CD4-positive, alpha-beta T cell (primary cell): ENCODE measurements at regions of chr12 and their contacts with region 1.

Region 1: DNA sequence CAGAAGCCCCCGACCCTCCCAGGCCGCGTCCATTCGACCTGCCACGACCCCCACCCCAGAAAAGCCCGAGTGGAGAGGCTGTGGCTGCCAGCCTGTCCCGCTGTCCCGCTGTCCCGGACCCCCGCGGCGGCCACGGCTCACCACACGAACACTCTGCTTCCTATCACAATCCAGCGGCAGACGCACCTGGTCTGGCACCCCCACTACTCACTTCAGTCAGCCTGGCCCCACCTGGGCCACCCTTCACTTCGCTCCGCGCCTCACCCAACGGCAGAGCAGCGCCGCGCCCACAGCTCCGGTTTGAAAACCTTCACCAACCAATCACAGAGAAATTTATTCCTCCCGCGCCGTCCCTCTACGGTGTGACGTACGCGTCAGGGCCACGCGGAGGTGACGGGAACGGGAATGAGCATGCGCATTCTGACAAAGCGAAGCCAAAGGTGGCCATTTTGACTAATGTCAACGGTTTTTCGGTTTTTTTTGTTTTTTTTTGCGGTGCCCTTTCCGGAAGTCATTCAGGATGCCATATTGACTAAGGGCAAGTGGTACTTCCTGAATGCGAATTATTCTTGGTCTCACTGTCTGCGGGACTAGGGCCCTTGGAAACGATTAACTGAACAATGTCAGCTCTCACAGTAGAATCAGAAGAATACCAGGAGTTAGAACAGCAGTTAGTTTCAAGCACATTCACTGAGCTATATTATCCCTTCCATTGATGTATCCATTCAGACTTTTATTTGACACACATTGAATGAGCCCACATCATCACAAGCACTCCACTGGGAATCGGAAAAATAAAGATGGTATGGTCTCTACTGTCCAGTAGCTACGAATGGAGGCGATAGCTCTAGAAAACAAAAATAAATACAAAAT is at the start of gene RACGAP1:
- DNase-seq: peak; percentile 88 to 99 (median 94)
- ATAC-seq: peak; percentile 97
- H3K4me3 ChIP-seq: peak within 1 kb of the TSS; percentile 75
- H3K4me3 Mint-ChIP-seq: peak within 1 kb of the TSS; percentile 94
- H3K27ac ChIP-seq: peak within 1 kb of the TSS; percentile 16 to 28
- H3K27ac Mint-ChIP-seq: peak within 1 kb of the TSS; percentile 66
- H3K4me1 ChIP-seq: peaks cover 18% of the 10 kb centered on the region
- H3K4me1 Mint-ChIP-seq: peaks cover 15% of the 10 kb centered on the region
- H3K27me3 ChIP-seq: no peaks in the 10 kb centered on the region
- H3K27me3 Mint-ChIP-seq: peaks cover 13% of the 10 kb centered on the region
- CTCF ChIP-seq: no peak
- total RNA-seq, gene RACGAP1: 3.0 to 3.3 TPM

Region 2: GRCh38 chr12:48716493-48717251 is 1308.8 kb before region 1 on chr12 and contains the start of gene CCNT1:
- CTCF ChIA-PET with region 1: no interaction called
- POLR2A ChIA-PET with region 1: no interaction called
- intact Hi-C with region 1: loop called in 1 of 2 experiments (anchors 5 kb)
- DNase-seq: peak; percentile 94 to 100 (median 97)
- ATAC-seq: peak; percentile 87
- H3K4me3 ChIP-seq: peak within 1 kb of the TSS; percentile 84
- H3K4me3 Mint-ChIP-seq: peak within 1 kb of the TSS; percentile 88
- H3K27ac ChIP-seq: peak within 1 kb of the TSS; percentile 97 to 99
- H3K27ac Mint-ChIP-seq: peak within 1 kb of the TSS; percentile 91
- H3K4me1 ChIP-seq: peaks cover 37% of the 10 kb centered on the region
- H3K4me1 Mint-ChIP-seq: peaks cover 41% of the 10 kb centered on the region
- H3K27me3 ChIP-seq: no peaks in the 10 kb centered on the region
- H3K27me3 Mint-ChIP-seq: no peaks in the 10 kb centered on the region
- CTCF ChIP-seq: no peak
- total RNA-seq, gene CCNT1: 150 TPM

Region 3: GRCh38 chr12:49930515-49931288 is 94.7 kb before region 1 on chr12:
- CTCF ChIA-PET with region 1: no interaction called
- POLR2A ChIA-PET with region 1: no interaction called
- intact Hi-C with region 1: no loop called
- DNase-seq: peak in 2 of 14 experiments; percentile 23 to 38
- ATAC-seq: no peak
- H3K4me3 ChIP-seq: no peak overlapping the region
- H3K4me3 Mint-ChIP-seq: no peak overlapping the region
- H3K27ac ChIP-seq: no peak overlapping the region
- H3K27ac Mint-ChIP-seq: no peak overlapping the region
- H3K4me1 ChIP-seq: no peaks in the 10 kb centered on the region
- H3K4me1 Mint-ChIP-seq: no peaks in the 10 kb centered on the region
- H3K27me3 ChIP-seq: peaks cover 0 to 5% of the 10 kb centered on the region in 2 experiments
- H3K27me3 Mint-ChIP-seq: no peaks in the 10 kb centered on the region
- CTCF ChIP-seq: no peak

Region 4: GRCh38 chr12:50167041-50167828 is 141.8 kb after region 1 on chr12 and contains the start of gene CERS5:
- CTCF ChIA-PET with region 1: no interaction called
- POLR2A ChIA-PET with region 1: interaction called, 4 read pairs
- intact Hi-C with region 1: loop called in 1 of 2 experiments (anchors 2 kb)
- DNase-seq: peak; percentile 91 to 99 (median 94)
- ATAC-seq: peak; percentile 96
- H3K4me3 ChIP-seq: peak within 1 kb of the TSS; percentile 84
- H3K4me3 Mint-ChIP-seq: peak within 1 kb of the TSS; percentile 95
- H3K27ac ChIP-seq: peak within 1 kb of the TSS; percentile 85
- H3K27ac Mint-ChIP-seq: peak within 1 kb of the TSS; percentile 81
- H3K4me1 ChIP-seq: peaks cover 20% of the 10 kb centered on the region
- H3K4me1 Mint-ChIP-seq: peaks cover 34% of the 10 kb centered on the region
- H3K27me3 ChIP-seq: no peaks in the 10 kb centered on the region
- H3K27me3 Mint-ChIP-seq: no peaks in the 10 kb centered on the region
- CTCF ChIP-seq: no peak
- total RNA-seq, gene CERS5: 42.3 to 44.5 TPM